ENCODE measurements at regions of chr7 and their contacts with region 1.

Region 1: GRCh38 chr7:144048648-144049047 is at the start of gene OR2A5:
- DNase-seq: no peak
- H3K4me3 ChIP-seq: no peak within 1 kb of the TSS
- H3K27ac ChIP-seq: no peak within 1 kb of the TSS
- H3K4me1 ChIP-seq: no peaks in the 10 kb centered on the region
- H3K27me3 ChIP-seq: no peaks in the 10 kb centered on the region
- CTCF ChIP-seq: no peak
- total RNA-seq, gene OR2A5: not detected in 2 replicates

Region 2: DNA sequence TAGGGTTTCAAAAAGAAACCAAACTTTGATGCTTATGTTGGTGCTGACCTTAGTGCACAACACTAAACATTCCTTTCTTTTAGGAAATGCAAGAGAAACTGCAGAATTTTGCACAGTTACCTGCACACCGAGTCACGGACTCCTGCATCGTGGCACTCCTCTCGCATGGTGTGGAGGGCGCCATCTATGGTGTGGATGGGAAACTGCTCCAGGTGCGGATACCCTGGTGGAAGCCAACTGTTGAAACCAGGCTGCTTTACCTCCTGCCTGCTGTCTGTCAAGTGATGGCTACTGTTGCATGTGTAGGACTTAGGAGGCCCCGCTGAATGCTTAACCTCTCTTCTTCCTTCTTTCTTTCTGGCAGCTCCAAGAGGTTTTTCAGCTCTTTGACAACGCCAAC is 748.8 kb before region 1 on chr7:
- CTCF ChIA-PET with region 1: no interaction called
- POLR2A ChIA-PET with region 1: no interaction called
- intact Hi-C with region 1: no loop called
- DNase-seq: peak; percentile 47
- H3K4me3 ChIP-seq: no peak overlapping the region
- H3K27ac ChIP-seq: no peak overlapping the region
- H3K4me1 ChIP-seq: peaks cover 28% of the 10 kb centered on the region
- H3K27me3 ChIP-seq: no peaks in the 10 kb centered on the region
- CTCF ChIP-seq: peak; percentile 80

Region 3: GRCh38 chr7:144256112-144256511 is 207.5 kb after region 1 on chr7:
- CTCF ChIA-PET with region 1: interaction called, 13 read pairs
- POLR2A ChIA-PET with region 1: no interaction called
- intact Hi-C with region 1: no loop called
- DNase-seq: peak; percentile 87
- H3K4me3 ChIP-seq: no peak overlapping the region
- H3K27ac ChIP-seq: peak overlapping the region; percentile 62
- H3K4me1 ChIP-seq: peaks cover 17% of the 10 kb centered on the region
- H3K27me3 ChIP-seq: no peaks in the 10 kb centered on the region
- CTCF ChIP-seq: no peak

Region 4: DNA sequence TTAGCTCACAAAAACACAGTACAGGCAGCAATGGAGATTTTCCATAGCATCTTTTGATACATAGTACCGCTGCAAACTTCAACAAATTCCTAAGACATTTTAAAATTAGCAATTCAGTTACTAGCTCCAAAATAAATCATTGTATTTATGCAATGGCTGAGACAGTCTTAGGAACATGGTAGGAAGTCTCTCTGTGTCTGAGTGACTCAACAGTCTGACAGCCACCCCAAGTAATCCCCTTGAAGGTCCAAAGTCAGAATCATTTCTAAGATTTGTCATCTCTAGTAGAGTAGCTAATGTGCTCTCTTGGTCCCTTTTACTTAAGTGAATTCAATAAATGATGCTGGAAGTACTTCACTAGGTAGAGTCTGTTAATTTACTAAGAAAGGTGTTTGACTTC is 448.6 kb after region 1 on chr7:
- CTCF ChIA-PET with region 1: no interaction called
- POLR2A ChIA-PET with region 1: no interaction called
- intact Hi-C with region 1: no loop called
- DNase-seq: no peak
- H3K4me3 ChIP-seq: no peak overlapping the region
- H3K27ac ChIP-seq: no peak overlapping the region
- H3K4me1 ChIP-seq: no peaks in the 10 kb centered on the region
- H3K27me3 ChIP-seq: no peaks in the 10 kb centered on the region
- CTCF ChIP-seq: no peak

Region 5: GRCh38 chr7:144713850-144714249 is 665.2 kb after region 1 on chr7:
- CTCF ChIA-PET with region 1: no interaction called
- POLR2A ChIA-PET with region 1: no interaction called
- intact Hi-C with region 1: no loop called
- DNase-seq: no peak
- H3K4me3 ChIP-seq: no peak overlapping the region
- H3K27ac ChIP-seq: no peak overlapping the region
- H3K4me1 ChIP-seq: no peaks in the 10 kb centered on the region
- H3K27me3 ChIP-seq: no peaks in the 10 kb centered on the region
- CTCF ChIP-seq: no peak